ENCODE measurements at regions of chr16 and their contacts with region 1.

Region 1: DNA sequence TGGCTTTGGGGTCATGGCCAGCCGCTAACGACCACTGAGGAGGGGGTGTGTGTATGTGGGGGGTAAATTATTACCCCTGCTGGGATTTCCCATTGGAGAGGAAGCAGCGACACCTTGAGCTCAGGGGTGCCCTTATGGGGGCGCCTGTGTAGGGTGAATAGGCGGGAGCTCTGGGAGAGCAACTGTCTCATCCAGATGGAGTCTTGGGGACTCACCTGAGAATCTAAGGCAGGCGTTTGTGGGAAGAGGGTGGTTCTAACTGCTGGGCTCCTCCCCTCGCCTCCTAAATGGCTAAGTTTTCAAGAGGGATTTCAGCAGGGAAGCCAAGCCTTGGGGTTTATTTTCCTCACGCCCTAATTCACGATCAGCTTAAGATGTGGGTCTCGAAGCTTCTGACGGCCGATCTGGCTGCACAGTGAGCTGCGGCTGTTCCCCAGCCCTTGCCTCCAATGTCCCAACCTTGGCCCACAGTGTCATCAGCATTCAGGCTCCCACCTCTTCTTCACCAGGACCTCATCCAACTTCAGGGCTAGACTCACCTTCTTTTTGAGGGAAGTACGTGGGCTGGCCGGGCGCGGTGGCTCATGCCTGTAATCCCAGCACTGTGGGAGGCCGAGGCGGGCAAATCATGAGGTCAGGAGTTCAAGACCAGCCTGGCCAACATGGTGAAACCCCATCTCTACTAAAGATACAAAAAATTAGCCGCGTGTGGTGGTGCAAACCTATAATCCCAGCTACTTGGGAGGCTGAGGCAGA is 136.9 kb upstream of the EEF2KMT start:
- DNase-seq: no peak
- H3K4me3 ChIP-seq: no peak overlapping the region
- H3K27ac ChIP-seq: no peak overlapping the region
- H3K4me1 ChIP-seq: no peaks in the 10 kb centered on the region
- H3K27me3 ChIP-seq: no peaks in the 10 kb centered on the region
- CTCF ChIP-seq: no peak

Region 2: GRCh38 chr16:5428932-5429331 is 194.5 kb after region 1 on chr16:
- intact Hi-C with region 1: loop called (anchors 5 kb)
- DNase-seq: peak; percentile 26
- H3K4me3 ChIP-seq: no peak overlapping the region
- H3K27ac ChIP-seq: no peak overlapping the region
- H3K4me1 ChIP-seq: no peaks in the 10 kb centered on the region
- H3K27me3 ChIP-seq: no peaks in the 10 kb centered on the region
- CTCF ChIP-seq: no peak

Region 3: GRCh38 chr16:5488581-5488980 is 254.1 kb after region 1 on chr16:
- intact Hi-C with region 1: loop called (anchors 5 kb)
- DNase-seq: no peak
- H3K4me3 ChIP-seq: no peak overlapping the region
- H3K27ac ChIP-seq: no peak overlapping the region
- H3K4me1 ChIP-seq: no peaks in the 10 kb centered on the region
- H3K27me3 ChIP-seq: no peaks in the 10 kb centered on the region
- CTCF ChIP-seq: no peak

Measured in colonic mucosa (tissue), 4 donors.